ENCODE measurements at regions of chr16 and their contacts with region 1.

Region 1: GRCh38 chr16:57576429-57576870 is 34.0 kb downstream of the ADGRG5 start:
- DNase-seq: peak; percentile 74 to 81
- H3K4me3 ChIP-seq: no peak overlapping the region
- H3K27ac ChIP-seq: no peak overlapping the region
- H3K4me1 ChIP-seq: peaks cover 0 to 1% of the 10 kb centered on the region in 2 donors
- H3K27me3 ChIP-seq: no peaks in the 10 kb centered on the region
- CTCF ChIP-seq: peak; percentile 88 to 95 (median 90)
- POLR2A ChIP-seq: no peak

Region 2: GRCh38 chr16:57720142-57720575 is 143.7 kb after region 1 on chr16:
- intact Hi-C with region 1: loop called (anchors 10 kb)
- DNase-seq: peak; percentile 63 to 69
- H3K4me3 ChIP-seq: no peak overlapping the region
- H3K27ac ChIP-seq: no peak overlapping the region
- H3K4me1 ChIP-seq: no peaks in the 10 kb centered on the region
- H3K27me3 ChIP-seq: no peaks in the 10 kb centered on the region
- CTCF ChIP-seq: peak in 5 of 6 experiments; percentile 19 to 57 (median 53)
- POLR2A ChIP-seq: no peak

Region 3: GRCh38 chr16:57863434-57864160 is 287.1 kb after region 1 on chr16:
- intact Hi-C with region 1: loop called (anchors 10 kb)
- DNase-seq: peak; percentile 69 to 74
- H3K4me3 ChIP-seq: no peak overlapping the region
- H3K27ac ChIP-seq: no peak overlapping the region
- H3K4me1 ChIP-seq: no peaks in the 10 kb centered on the region
- H3K27me3 ChIP-seq: no peaks in the 10 kb centered on the region
- CTCF ChIP-seq: peak in 5 of 6 experiments; percentile 40 to 84 (median 74)
- POLR2A ChIP-seq: no peak

Measured in thyroid gland (tissue), 4 donors.